AG04450 (cell line): ENCODE measurements at regions of chr2 and their contacts with region 1.

Region 1: GRCh38 chr2:27133905-27134780 is at the start of gene PREB:
- DNase-seq: peak; percentile 87
- H3K4me3 ChIP-seq: peak within 1 kb of the TSS; percentile 94
- H3K27ac ChIP-seq: no peak within 1 kb of the TSS
- H3K27me3 ChIP-seq: peaks cover 11% of the 10 kb centered on the region
- CTCF ChIP-seq: peak; percentile 64
- polyA plus RNA-seq, gene PREB: 44.9 and 57.3 TPM in 2 replicates

Region 2: GRCh38 chr2:27123302-27124231 is 10.6 kb before region 1 on chr2 and contains the start of gene ABHD1:
- CTCF ChIA-PET with region 1: interaction called, 12 read pairs
- POLR2A ChIA-PET with region 1: interaction called, 3 read pairs
- DNase-seq: no peak
- H3K4me3 ChIP-seq: peak within 1 kb of the TSS; percentile 62
- H3K27ac ChIP-seq: no peak within 1 kb of the TSS
- H3K27me3 ChIP-seq: peaks cover 32% of the 10 kb centered on the region
- CTCF ChIP-seq: no peak
- polyA plus RNA-seq, gene ABHD1: 0.10 TPM in 1 of 2 replicates, not detected in the other

Region 3: DNA sequence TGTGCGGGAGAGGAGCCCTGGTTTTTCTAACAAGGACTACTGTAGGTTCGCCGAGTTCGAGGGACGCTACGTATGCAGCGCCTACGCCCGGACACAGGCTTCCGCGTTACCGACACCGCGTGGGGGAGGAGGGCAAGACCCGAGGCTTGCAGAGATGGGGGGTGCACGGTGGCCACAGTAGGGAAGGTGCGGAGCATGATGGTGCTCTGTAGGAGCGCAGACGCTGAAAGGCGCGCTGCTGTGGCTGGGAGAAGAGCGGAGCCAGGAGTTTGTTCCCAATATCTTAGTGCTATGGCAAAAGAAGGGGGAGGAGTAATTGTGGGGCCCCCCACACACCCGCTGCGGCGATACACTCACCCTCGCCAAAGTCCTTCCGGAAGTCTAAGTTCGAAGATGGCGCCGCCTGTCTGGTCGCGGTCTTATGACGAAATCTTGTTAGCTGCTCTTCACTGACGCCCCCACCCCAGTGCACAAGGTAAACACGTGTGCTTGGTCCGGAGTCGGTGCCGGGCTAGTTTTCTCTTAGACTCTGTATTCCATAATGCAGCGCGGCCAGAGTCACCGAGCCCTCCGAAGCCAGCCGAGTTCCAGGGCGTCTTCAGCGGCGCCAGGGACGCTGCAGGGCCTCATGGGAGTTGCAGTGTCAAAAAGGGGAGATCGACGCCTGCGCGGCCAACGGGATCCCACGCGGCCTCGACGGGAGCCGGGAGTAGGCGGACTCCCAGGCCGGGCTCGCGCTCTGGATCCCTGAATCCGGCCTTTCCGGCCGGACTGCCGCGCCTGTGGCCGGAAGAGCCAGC is 222.4 kb after region 1 on chr2 and contains the start of gene GTF3C2:
- CTCF ChIA-PET with region 1: no interaction called
- POLR2A ChIA-PET with region 1: no interaction called
- DNase-seq: peak; percentile 90
- H3K4me3 ChIP-seq: peak within 1 kb of the TSS; percentile 98
- H3K27ac ChIP-seq: peak within 1 kb of the TSS; percentile 96
- H3K27me3 ChIP-seq: no peaks in the 10 kb centered on the region
- CTCF ChIP-seq: no peak
- polyA plus RNA-seq, gene GTF3C2: 39.0 TPM in 2 replicates